OCI-LY7 (cell line): ENCODE measurements at regions of chr6 and their contacts with region 1.

Region 1: GRCh38 chr6:150685860-150686259 is 86.2 kb downstream of the PLEKHG1 start:
- DNase-seq: peak; percentile 80
- H3K4me3 ChIP-seq: no peak overlapping the region
- H3K27ac ChIP-seq: no peak overlapping the region
- H3K4me1 ChIP-seq: peaks cover 66% of the 10 kb centered on the region
- CTCF ChIP-seq: peak; percentile 99

Region 2: DNA sequence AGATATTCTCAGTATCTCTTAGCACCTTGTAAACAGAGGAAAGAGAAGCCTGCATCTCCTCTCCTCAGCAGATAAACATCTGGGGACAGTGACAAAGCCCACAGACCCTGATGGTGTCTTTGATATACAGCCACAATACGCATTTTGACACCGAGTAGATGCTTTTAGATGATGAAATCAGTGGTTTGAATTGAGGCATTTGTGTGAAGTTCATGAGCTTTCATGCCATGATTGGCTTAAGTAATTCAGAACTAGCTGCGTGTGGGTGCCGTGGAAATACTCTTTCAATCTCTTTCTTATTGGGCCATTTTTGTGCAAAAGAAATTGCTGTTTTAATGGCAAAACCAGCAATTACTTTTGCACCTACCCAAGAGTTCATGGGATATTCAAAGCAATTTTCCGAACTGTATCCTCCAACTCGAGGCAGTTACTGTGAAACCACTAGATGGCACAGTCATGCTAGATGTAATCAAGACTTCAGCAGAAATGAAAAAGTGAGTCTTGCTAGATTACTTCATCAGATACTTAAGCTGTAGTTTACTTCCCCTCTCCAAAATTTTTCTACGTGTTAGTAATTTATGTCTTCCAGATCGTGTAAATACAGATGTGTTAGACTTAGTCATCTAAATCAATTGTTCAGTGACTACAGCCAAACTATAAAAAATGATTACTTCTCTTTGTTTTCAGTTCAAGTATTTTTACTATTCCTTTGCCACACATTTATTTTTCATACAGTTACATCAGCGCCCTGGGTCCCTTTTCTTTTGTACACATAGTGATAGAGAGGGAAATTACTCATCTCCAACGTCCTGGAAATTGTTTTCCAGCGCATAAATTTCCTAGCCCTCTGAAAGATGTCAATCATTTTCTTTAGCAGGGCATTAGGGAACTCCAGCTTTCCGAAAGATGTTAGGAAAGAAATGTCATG is 267.7 kb before region 1 on chr6:
- CTCF ChIA-PET with region 1: interaction called, 3 read pairs
- POLR2A ChIA-PET with region 1: no interaction called
- intact Hi-C with region 1: loop called (anchors 5 kb)
- DNase-seq: peak; percentile 91
- H3K4me3 ChIP-seq: peak overlapping the region; percentile 3
- H3K27ac ChIP-seq: peak overlapping the region; percentile 9
- H3K4me1 ChIP-seq: peaks cover 14% of the 10 kb centered on the region
- CTCF ChIP-seq: peak; percentile 98

Region 3: GRCh38 chr6:150470960-150471665 is 214.7 kb before region 1 on chr6:
- CTCF ChIA-PET with region 1: no interaction called
- POLR2A ChIA-PET with region 1: no interaction called
- intact Hi-C with region 1: no loop called
- DNase-seq: no peak
- H3K4me3 ChIP-seq: no peak overlapping the region
- H3K27ac ChIP-seq: no peak overlapping the region
- H3K4me1 ChIP-seq: no peaks in the 10 kb centered on the region
- CTCF ChIP-seq: no peak

Region 4: GRCh38 chr6:150622941-150623874 is 62.7 kb before region 1 on chr6:
- CTCF ChIA-PET with region 1: no interaction called
- POLR2A ChIA-PET with region 1: interaction called, 3 read pairs
- intact Hi-C with region 1: loop called (anchors 1 kb)
- DNase-seq: peak; percentile 99
- H3K4me3 ChIP-seq: peak overlapping the region; percentile 57
- H3K27ac ChIP-seq: peak overlapping the region; percentile 99
- H3K4me1 ChIP-seq: peaks cover 94% of the 10 kb centered on the region
- CTCF ChIP-seq: no peak

Region 5: DNA sequence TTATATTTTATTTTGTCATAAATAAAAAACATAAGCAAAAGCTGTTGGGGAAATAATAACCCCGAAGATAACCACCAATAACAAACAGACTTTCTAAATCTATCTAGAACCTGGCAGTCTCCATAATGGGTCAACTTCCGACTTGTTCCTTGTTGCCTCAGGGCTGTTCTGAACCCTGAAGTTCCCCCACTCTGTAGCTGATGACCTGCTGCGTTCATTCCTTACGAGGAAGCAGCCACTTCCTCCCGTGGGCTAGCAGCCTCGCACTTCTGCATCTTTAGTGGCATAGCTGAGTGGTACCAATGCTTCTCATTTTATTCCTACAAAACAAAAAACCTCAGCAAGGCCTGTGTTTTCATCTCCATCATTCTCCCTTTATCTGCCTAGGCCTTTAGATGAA is 16.8 kb after region 1 on chr6:
- CTCF ChIA-PET with region 1: interaction called, 3 read pairs
- POLR2A ChIA-PET with region 1: interaction called, 10 read pairs
- intact Hi-C with region 1: no loop called
- DNase-seq: no peak
- H3K4me3 ChIP-seq: no peak overlapping the region
- H3K27ac ChIP-seq: no peak overlapping the region
- H3K4me1 ChIP-seq: peaks cover 56% of the 10 kb centered on the region
- CTCF ChIP-seq: no peak

Region 6: GRCh38 chr6:150741633-150742504 is 56.0 kb after region 1 on chr6:
- CTCF ChIA-PET with region 1: interaction called, 4 read pairs
- POLR2A ChIA-PET with region 1: no interaction called
- intact Hi-C with region 1: loop called (anchors 2 kb)
- DNase-seq: peak; percentile 68
- H3K4me3 ChIP-seq: no peak overlapping the region
- H3K27ac ChIP-seq: no peak overlapping the region
- H3K4me1 ChIP-seq: peaks cover 4% of the 10 kb centered on the region
- CTCF ChIP-seq: peak; percentile 87

Region 7: GRCh38 chr6:150767571-150768018 is 81.7 kb after region 1 on chr6:
- CTCF ChIA-PET with region 1: no interaction called
- POLR2A ChIA-PET with region 1: no interaction called
- intact Hi-C with region 1: loop called (anchors 5 kb)
- DNase-seq: no peak
- H3K4me3 ChIP-seq: no peak overlapping the region
- H3K27ac ChIP-seq: no peak overlapping the region
- H3K4me1 ChIP-seq: peaks cover 45% of the 10 kb centered on the region
- CTCF ChIP-seq: no peak

Region 8: DNA sequence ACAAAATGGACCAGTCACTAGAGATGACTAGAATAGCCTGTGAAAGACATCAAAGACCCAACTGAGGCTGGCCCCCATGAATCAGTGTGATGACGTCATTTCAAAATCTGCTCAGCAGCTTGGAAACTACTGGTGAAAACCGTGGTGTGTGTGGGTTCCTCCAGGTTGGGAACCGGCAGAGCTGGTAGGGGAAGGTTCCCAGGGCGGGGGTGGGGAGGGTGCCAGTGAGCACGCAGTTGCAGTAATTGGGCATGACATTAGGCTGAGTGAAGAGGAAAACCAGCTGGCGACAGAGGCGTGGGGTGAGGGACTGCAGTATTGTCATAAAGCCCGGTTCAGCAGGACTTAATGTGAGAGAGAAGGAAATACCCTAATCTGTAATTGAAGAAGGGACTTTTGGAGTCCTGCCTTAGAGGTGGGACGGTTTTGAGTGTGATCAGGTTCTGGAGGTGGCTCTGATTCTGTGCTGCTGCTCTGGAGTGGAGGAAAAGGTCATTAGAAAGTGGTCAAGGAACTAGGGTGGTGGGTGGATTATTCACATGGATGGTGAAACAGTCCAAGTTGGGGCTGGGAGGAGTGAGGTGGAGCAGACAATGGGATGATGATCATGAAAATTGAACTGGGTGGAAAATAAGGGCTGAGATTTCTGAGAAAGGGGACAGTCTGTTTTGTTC is 127.6 kb after region 1 on chr6:
- CTCF ChIA-PET with region 1: interaction called, 13 read pairs
- POLR2A ChIA-PET with region 1: no interaction called
- intact Hi-C with region 1: loop called (anchors 1 kb)
- DNase-seq: no peak
- H3K4me3 ChIP-seq: no peak overlapping the region
- H3K27ac ChIP-seq: no peak overlapping the region
- H3K4me1 ChIP-seq: peaks cover 8% of the 10 kb centered on the region
- CTCF ChIP-seq: no peak